Right ventricle myocardium inferior (tissue), 1 donor: ENCODE measurements at regions of chr5 and their contacts with region 1.

Region 1: DNA sequence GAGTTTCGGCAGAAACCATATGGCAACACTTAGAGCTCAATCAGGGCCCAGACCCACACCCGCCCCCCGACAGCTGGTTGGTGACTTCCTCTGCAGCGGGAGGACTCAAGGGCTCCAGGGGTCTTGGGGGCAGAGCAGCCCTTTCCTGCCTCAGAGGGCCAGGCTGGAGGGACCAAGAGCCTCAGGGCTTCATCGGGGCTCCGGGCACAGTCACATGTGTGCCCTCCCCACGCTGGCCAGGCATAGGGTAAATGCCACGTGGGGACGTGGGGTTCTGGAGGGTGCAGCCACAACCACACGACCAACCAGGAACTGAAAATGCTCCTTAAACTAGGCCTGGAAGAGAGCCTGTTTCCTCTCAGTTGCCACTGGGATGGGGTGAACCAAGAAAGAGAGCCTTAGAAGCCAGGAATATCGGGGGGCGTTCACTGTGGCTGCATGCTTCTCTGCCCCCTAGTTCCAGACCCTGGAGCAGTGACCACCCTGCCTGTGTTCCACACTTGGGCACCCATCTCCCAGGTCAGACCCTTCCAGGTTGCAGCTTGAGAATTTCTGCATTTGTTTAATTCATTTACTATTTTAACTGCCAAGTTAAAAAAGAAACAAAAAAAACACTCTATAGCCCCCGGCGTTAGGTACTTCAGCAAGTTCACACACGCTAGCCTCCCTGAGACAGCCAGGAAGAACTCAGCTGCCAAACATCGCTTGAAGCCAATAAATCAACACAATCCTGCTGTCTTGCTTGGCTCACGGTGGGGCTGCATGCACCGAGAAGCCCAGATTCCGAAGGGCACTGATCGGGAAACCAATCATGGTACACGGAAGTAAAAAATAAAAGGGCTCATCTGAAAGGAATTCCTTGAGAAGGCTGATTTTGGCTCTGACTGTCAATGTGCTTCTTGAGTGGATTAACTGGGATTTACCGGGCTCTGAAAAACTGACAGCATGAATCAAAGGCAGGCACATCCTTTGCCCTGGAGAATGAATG is 56.1 kb upstream of the PHYKPL start:
- DNase-seq: peak; percentile 30
- ATAC-seq: no peak

Region 2: GRCh38 chr5:178388386-178389025 is 99.8 kb after region 1 on chr5:
- intact Hi-C with region 1: loop called (anchors 5 kb)
- DNase-seq: peak; percentile 66
- ATAC-seq: peak; percentile 33